Calu3 (cell line): ENCODE measurements at regions of chr7 and their contacts with region 1.

Region 1: GRCh38 chr7:103148994-103149807 is at the start of gene NAPEPLD:
- DNase-seq: peak; percentile 71
- H3K4me3 Mint-ChIP-seq: peak within 1 kb of the TSS; percentile 78
- H3K27ac Mint-ChIP-seq: peak within 1 kb of the TSS; percentile 78
- H3K4me1 Mint-ChIP-seq: peaks cover 26% of the 10 kb centered on the region
- H3K27me3 Mint-ChIP-seq: no peaks in the 10 kb centered on the region
- CTCF ChIP-seq: no peak
- total RNA-seq, gene NAPEPLD: 25.9 and 28.6 TPM in 2 replicates

Region 2: GRCh38 chr7:103074519-103075336 is 74.5 kb before region 1 on chr7 and contains the starts of genes ARMC10 and FBXL13:
- CTCF ChIA-PET with region 1: interaction called, 3 read pairs
- intact Hi-C with region 1: loop called (anchors 5 kb)
- DNase-seq: peak; percentile 88
- H3K4me3 Mint-ChIP-seq: peak within 1 kb of the TSS; percentile 83
- H3K27ac Mint-ChIP-seq: peak within 1 kb of the TSS; percentile 78
- H3K4me1 Mint-ChIP-seq: peaks cover 33% of the 10 kb centered on the region
- H3K27me3 Mint-ChIP-seq: no peaks in the 10 kb centered on the region
- CTCF ChIP-seq: no peak
- total RNA-seq, gene ARMC10: 34.5 and 41.0 TPM in 2 replicates
- total RNA-seq, gene FBXL13: 1.3 and 2.6 TPM in 2 replicates

Region 3: DNA sequence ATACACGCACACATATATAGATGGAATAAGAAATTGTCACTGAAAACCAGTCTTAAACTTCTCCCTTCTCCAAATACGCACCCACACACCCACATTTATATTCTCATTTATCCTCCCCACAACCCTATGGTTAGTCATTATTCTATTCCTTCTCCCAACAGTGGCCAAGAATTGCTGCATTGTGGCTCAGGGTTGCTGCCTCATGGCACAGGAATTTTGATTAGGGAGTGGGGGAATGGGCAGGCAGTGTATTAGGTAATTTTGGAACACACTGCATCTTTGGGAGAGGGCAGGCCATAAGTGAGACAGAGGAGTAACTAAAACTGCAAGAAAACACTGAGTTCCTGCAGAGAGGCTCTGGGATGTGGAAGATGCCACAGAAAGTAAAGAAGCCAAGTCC is 36.0 kb before region 1 on chr7:
- CTCF ChIA-PET with region 1: no interaction called
- intact Hi-C with region 1: loop called (anchors 5 kb)
- DNase-seq: peak; percentile 32
- H3K4me3 Mint-ChIP-seq: no peak overlapping the region
- H3K27ac Mint-ChIP-seq: peak overlapping the region; percentile 8
- H3K4me1 Mint-ChIP-seq: peaks cover 36% of the 10 kb centered on the region
- H3K27me3 Mint-ChIP-seq: no peaks in the 10 kb centered on the region
- CTCF ChIP-seq: no peak